ENCODE measurements at regions of chr14 and their contacts with region 1.

Region 1: GRCh38 chr14:55609681-55610080 is 29.7 kb downstream of the KTN1 start:
- DNase-seq: no peak
- ATAC-seq: no peak

Region 2: DNA sequence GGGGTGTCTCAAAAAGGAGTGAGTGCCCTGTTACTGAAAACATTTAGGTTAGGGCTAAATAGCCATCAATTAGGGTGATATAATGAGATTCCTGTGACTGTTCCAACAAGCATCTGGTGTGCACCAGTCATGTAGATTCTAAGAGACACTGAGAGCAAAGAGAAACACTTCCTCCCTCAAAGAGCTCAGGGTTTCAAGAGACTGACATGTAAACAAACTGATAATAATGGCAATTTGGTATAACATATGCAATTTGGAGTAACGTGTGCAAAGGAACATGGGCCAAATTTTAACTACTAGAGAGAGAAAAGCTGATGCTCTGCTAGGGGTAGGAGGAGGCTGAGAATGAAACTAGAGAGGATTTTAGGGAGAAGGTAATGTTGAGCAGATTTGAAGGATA is 1890.1 kb before region 1 on chr14:
- intact Hi-C with region 1: no loop called
- DNase-seq: no peak
- ATAC-seq: no peak

Region 3: GRCh38 chr14:55681088-55681487 is 71.4 kb after region 1 on chr14:
- intact Hi-C with region 1: loop called (anchors 2 kb)
- DNase-seq: no peak
- ATAC-seq: no peak